GM12878 (cell line): ENCODE measurements at regions of chr7 and their contacts with region 1.

Region 1: GRCh38 chr7:74401137-74401859 is 52.4 kb upstream of the GTF2IRD1 start:
- DNase-seq: no peak
- ATAC-seq: peak; percentile 79
- H3K4me3 ChIP-seq: no peak overlapping the region
- H3K27ac ChIP-seq: no peak overlapping the region
- H3K4me1 ChIP-seq: no peaks in the 10 kb centered on the region
- H3K27me3 ChIP-seq: no peaks in the 10 kb centered on the region
- CTCF ChIP-seq: peak; percentile 90 to 95 (median 95)
- EP300 ChIP-seq: no peak
- POLR2A ChIP-seq: no peak
- RAD21 ChIP-seq: peak; percentile 88

Region 2: DNA sequence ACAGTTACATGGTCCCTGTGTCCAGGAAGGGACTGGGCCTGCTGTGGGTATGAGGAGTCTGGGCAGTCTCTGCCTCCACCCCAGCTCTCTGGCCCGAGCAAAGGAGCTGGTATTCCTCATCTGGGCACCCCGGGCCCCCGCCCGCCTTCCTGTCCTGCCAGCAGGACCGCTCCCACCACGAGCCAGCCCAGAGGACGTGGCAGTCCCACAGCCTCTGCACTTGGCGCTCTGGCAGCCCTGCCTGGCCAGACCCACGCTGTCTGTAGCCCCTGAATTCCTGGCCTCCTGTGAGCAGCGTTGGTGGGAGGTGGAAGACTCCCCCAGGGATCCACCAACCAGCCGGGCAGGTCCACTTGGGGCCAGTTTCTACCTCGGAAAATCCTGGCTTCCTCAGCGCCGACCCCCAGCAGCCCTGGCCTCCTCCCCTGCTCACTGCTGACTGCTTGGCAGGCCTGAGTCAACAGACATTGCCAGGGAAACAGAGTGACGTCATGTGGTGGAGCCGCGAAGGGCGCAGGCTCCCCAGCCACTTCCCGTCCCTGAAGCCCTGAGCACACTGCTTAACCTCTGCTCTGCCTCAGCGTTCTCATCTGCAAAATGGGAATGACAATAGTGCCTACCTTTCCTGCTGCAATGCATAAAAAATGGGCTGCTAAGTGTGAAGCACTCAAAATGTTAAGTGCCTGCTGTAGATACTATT is 339.3 kb before region 1 on chr7:
- CTCF ChIA-PET with region 1: interaction called, 36 read pairs
- POLR2A ChIA-PET with region 1: no interaction called
- RAD21 ChIA-PET with region 1: interaction called, 15 read pairs
- SMC1A ChIA-PET with region 1: interaction called, 4 read pairs
- in situ Hi-C with region 1: loop called (anchors 5 kb)
- intact Hi-C with region 1: no loop called
- DNase-seq: no peak
- ATAC-seq: peak; percentile 96
- H3K4me3 ChIP-seq: no peak overlapping the region
- H3K27ac ChIP-seq: no peak overlapping the region
- H3K4me1 ChIP-seq: no peaks in the 10 kb centered on the region
- H3K27me3 ChIP-seq: peaks cover 0 to 1% of the 10 kb centered on the region in 2 experiments; a peak in 1 of 4 replicates
- CTCF ChIP-seq: no peak
- EP300 ChIP-seq: no peak
- POLR2A ChIP-seq: no peak
- RAD21 ChIP-seq: no peak

Region 3: DNA sequence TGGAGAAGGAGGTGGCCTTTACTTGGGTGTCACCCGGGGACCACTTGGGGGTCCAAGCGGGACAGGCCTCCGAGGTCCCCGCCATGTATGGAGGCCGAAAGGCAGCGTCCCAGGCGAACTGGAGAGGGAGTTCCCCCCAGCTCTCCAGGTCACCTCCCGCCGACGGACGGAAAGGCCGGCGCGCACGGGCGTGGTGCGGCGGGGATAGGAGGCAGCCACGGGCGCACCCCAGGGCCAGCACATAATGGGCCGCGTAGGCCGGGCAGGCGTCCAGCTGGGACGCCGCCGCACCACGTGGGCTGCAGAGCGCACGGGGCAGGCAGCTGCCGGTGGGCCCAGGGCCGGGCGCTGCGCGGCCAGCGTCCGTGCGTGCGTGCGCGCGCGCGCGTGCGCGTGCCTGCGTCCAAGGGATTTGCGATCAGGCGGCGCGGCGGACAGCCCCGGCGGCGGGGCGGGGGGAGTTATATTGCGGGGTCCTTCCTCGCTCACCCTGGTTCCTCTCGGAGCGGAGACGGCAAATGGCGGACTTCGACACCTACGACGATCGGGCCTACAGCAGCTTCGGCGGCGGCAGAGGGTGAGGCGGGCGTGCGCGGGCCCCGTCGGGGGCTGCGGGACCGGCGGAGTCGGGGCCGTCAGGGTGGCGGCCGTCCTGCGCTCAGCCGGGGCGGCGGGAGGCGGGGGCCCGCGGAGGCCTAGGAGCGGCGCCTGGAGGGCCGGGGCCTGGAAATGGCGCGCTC is 227.3 kb before region 1 on chr7 and contains the start of gene EIF4H:
- CTCF ChIA-PET with region 1: interaction called, 9 read pairs
- POLR2A ChIA-PET with region 1: no interaction called
- RAD21 ChIA-PET with region 1: interaction called, 10 read pairs
- SMC1A ChIA-PET with region 1: interaction called, 4 read pairs
- in situ Hi-C with region 1: no loop called
- intact Hi-C with region 1: no loop called
- DNase-seq: peak; percentile 58
- ATAC-seq: peak; percentile 90
- H3K4me3 ChIP-seq: peak within 1 kb of the TSS; percentile 98
- H3K27ac ChIP-seq: peak within 1 kb of the TSS; percentile 80
- H3K4me1 ChIP-seq: peaks cover 6% of the 10 kb centered on the region
- H3K27me3 ChIP-seq: no peaks in the 10 kb centered on the region
- CTCF ChIP-seq: no peak
- EP300 ChIP-seq: 0 out of 4 replicates have a peak, but pooled peaks of 1 of the 2 experiments have one; percentile 14
- POLR2A ChIP-seq: peak; percentile 95
- RAD21 ChIP-seq: no peak
- polyA plus RNA-seq, gene EIF4H: 9.9 to 23.8 TPM

Region 4: DNA sequence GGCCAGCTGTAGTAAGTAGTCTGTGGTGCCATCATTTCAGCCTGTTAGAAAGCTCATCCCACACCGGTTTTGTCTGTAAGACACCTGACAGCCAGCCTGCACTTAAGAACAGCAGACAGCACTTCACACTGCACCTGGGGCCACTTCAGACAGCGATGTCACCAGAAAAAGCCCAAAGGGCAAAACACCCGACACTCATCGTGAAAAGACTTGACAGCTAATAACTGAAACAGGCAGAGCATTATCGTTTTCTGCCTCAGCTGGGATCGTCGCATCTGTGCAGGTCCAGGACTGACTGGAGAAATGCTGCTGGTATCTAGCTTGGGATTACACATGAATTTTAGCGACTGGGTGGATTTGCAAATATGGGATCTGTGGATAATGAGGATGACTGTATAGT is 208.2 kb before region 1 on chr7:
- CTCF ChIA-PET with region 1: interaction called, 11 read pairs
- POLR2A ChIA-PET with region 1: no interaction called
- RAD21 ChIA-PET with region 1: no interaction called
- SMC1A ChIA-PET with region 1: interaction called, 3 read pairs
- in situ Hi-C with region 1: no loop called
- intact Hi-C with region 1: no loop called
- DNase-seq: no peak
- ATAC-seq: no peak
- H3K4me3 ChIP-seq: no peak overlapping the region
- H3K27ac ChIP-seq: no peak overlapping the region
- H3K4me1 ChIP-seq: no peaks in the 10 kb centered on the region
- H3K27me3 ChIP-seq: no peaks in the 10 kb centered on the region
- CTCF ChIP-seq: no peak
- EP300 ChIP-seq: no peak
- POLR2A ChIP-seq: no peak
- RAD21 ChIP-seq: no peak

Region 5: DNA sequence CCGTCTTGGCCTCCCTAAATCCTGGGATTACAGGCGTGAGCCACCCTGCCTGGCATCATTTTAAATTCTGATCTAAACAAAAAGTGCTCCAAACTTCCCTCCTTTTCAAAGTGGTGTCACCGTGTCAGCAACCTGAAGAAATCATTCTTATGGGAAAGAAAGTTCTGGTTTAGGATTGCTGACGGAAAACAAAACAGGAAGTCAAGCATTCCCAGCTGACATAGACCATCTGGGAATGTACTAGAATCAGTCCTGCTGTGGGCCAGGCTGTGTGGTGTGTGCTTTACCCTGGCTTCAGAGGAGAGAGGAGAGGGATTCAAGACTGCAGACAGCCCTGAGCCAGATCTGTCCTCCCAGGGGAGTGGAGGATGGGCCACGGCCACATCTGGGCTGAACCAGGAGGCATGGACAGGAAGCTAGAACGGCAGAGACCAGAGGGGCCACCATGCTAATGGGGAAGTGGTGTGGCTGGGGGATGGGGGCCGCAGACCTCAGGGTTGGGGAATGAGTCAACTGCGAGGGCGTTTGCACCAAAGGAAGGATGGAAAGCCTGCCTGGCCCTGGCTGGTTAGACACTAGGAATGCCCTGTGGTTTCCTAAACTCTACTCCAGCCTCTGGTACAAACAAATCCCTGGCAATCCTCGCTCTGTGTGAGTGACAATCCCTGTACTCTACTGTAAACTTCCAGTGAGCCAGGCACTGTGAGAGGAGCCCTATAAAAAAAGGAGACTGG is 128.8 kb before region 1 on chr7:
- CTCF ChIA-PET with region 1: interaction called, 30 read pairs
- POLR2A ChIA-PET with region 1: interaction called, 3 read pairs
- RAD21 ChIA-PET with region 1: interaction called, 14 read pairs
- SMC1A ChIA-PET with region 1: interaction called, 20 read pairs
- in situ Hi-C with region 1: no loop called
- intact Hi-C with region 1: no loop called
- DNase-seq: peak; percentile 97
- ATAC-seq: peak; percentile 89
- H3K4me3 ChIP-seq: peak overlapping the region; percentile 19; the same call in 1 of the 2 replicates
- H3K27ac ChIP-seq: peak overlapping the region; percentile 98
- H3K4me1 ChIP-seq: peaks cover 65% of the 10 kb centered on the region
- H3K27me3 ChIP-seq: no peaks in the 10 kb centered on the region
- CTCF ChIP-seq: no peak
- EP300 ChIP-seq: peak; percentile 97 to 99
- POLR2A ChIP-seq: peak; percentile 76
- RAD21 ChIP-seq: 0 out of 2 replicates have a peak, but pooled peaks have one; percentile 32

Region 6: DNA sequence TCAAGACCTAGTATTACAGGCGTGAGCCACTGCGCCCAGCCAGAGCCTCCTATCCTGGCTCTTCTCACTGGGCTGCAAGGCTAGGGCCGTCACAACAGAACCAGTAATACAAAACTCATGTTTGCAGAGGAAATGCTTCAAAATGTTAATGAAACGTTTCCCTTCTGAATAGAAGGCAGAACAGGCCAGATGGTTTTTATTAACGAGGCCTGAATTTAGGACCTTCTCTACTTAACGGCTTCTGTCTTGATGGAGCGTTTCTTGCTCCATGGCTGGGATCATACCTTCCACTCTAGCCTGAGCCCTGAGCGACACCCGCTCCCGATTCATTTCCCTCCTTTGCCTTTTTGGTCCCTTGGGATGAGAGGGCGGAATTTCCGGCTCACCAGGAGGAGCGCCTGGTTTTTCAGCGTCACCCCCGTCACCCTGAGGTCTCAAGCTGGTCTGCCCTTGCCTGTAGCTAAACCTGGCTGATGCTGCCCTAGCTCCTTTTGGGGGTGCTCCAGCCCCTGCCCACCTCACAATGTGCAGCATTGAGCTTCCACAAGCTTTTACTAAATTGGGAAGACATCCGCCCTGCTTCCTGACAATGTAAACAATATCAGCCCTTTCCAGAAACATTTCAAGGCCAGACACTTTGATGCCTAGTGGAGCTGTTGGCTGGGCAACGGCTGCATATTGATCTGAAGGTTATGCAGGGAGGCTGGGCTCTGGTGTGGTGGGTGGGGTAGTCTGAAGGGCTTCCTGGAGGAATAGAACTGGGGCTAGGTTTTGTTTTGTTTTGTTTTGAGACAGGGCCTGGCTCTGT is 106.9 kb before region 1 on chr7:
- CTCF ChIA-PET with region 1: interaction called, 11 read pairs
- POLR2A ChIA-PET with region 1: no interaction called
- RAD21 ChIA-PET with region 1: interaction called, 6 read pairs
- SMC1A ChIA-PET with region 1: interaction called, 7 read pairs
- in situ Hi-C with region 1: no loop called
- intact Hi-C with region 1: loop called (anchors 10 kb)
- DNase-seq: no peak
- ATAC-seq: no peak
- H3K4me3 ChIP-seq: peak overlapping the region; percentile 97; the same call in 1 of the 2 replicates
- H3K27ac ChIP-seq: no peak overlapping the region; the same call in 1 of the 2 replicates
- H3K4me1 ChIP-seq: peaks cover 23% of the 10 kb centered on the region
- H3K27me3 ChIP-seq: no peaks in the 10 kb centered on the region
- CTCF ChIP-seq: no peak
- EP300 ChIP-seq: no peak
- POLR2A ChIP-seq: no peak
- RAD21 ChIP-seq: no peak

Region 7: DNA sequence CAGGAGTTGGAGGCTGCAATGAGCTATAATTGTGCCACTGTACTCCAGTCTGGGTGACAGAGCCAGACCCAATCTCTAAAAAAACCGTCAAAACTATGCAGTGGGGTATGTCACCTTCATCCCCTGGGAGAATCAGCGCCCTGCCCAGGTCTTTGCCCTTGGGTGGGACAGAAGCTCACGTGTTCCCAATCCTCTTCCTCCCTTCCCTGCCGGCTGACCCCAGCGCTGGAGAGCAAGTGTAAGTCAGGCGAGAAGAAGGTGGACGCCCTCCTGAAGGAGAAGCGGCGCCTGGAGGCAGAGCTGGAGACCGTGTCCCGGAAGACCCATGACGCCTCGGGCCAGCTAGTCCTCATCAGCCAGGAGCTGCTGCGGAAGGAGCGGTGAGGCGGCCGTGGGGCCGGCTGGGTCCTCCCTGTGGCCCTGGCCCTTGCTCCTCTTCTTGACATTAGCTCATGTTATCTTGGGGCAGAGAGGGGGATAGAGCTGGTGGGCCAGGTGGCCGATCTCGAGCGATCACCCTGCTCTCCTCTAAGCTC is 12.3 kb before region 1 on chr7:
- CTCF ChIA-PET with region 1: interaction called, 14 read pairs
- POLR2A ChIA-PET with region 1: interaction called, 6 read pairs
- RAD21 ChIA-PET with region 1: interaction called, 3 read pairs
- SMC1A ChIA-PET with region 1: interaction called, 8 read pairs
- in situ Hi-C with region 1: no loop called
- intact Hi-C with region 1: no loop called
- DNase-seq: no peak
- ATAC-seq: no peak
- H3K4me3 ChIP-seq: no peak overlapping the region
- H3K27ac ChIP-seq: no peak overlapping the region
- H3K4me1 ChIP-seq: no peaks in the 10 kb centered on the region
- H3K27me3 ChIP-seq: no peaks in the 10 kb centered on the region
- CTCF ChIP-seq: no peak
- EP300 ChIP-seq: no peak
- POLR2A ChIP-seq: no peak
- RAD21 ChIP-seq: no peak